ENCODE measurements at regions of chr9 and their contacts with region 1.

Region 1: GRCh38 chr9:12614488-12614887 is 78.7 kb upstream of the TYRP1 start:
- DNase-seq: no peak
- ATAC-seq: no peak
- H3K4me3 ChIP-seq: no peak overlapping the region
- H3K27ac ChIP-seq: no peak overlapping the region
- H3K4me1 ChIP-seq: no peaks in the 10 kb centered on the region
- H3K27me3 ChIP-seq: no peaks in the 10 kb centered on the region

Region 2: DNA sequence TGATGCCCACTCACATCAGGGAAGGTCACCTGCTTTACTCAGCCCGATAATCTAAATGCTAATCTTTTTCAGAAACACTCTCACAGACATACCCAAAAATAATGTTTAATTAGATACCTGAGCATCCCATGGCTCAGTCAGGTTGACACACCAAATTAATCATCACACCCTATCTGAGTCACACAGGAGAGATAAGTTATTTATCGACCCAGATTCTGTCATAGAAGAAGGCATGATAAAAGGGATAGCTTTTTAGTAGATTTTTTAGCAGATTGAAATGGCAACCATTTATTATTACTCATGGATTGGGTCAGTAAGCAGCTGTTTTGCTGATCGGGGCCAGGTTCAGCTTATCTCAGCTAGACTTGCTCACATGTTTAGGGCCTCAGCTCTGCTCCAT is 19.1 kb before region 1 on chr9:
- intact Hi-C with region 1: loop called in 1 of 2 experiments (anchors 1 kb)
- DNase-seq: no peak
- ATAC-seq: no peak
- H3K4me3 ChIP-seq: no peak overlapping the region
- H3K27ac ChIP-seq: no peak overlapping the region
- H3K4me1 ChIP-seq: no peaks in the 10 kb centered on the region
- H3K27me3 ChIP-seq: no peaks in the 10 kb centered on the region

Region 3: GRCh38 chr9:12775679-12776512 is 161.4 kb after region 1 on chr9:
- intact Hi-C with region 1: no loop called
- DNase-seq: peak; percentile 67 to 85
- ATAC-seq: peak; percentile 93
- H3K4me3 ChIP-seq: peak overlapping the region; percentile 69 to 89
- H3K27ac ChIP-seq: peak overlapping the region in 1 of 2 donors; percentile 72
- H3K4me1 ChIP-seq: peaks cover 2 to 8% of the 10 kb centered on the region in 2 donors
- H3K27me3 ChIP-seq: no peaks in the 10 kb centered on the region

Measured in aorta (tissue), 5 donors.